Endothelial cell of umbilical vein (primary cell): ENCODE measurements at regions of chr14 and their contacts with region 1.

Region 1: GRCh38 chr14:30558675-30559555 is at the start of gene G2E3:
- DNase-seq: peak; percentile 89
- H3K4me3 ChIP-seq: peak within 1 kb of the TSS; percentile 90 to 97 (median 94)
- H3K27ac ChIP-seq: peak within 1 kb of the TSS; percentile 66
- H3K4me1 ChIP-seq: peaks cover 12% of the 10 kb centered on the region
- H3K27me3 ChIP-seq: no peaks in the 10 kb centered on the region
- CTCF ChIP-seq: no peak
- POLR2A ChIP-seq: peak; percentile 86
- total RNA-seq, gene G2E3: 26.6 and 34.8 TPM in 2 replicates

Region 2: DNA sequence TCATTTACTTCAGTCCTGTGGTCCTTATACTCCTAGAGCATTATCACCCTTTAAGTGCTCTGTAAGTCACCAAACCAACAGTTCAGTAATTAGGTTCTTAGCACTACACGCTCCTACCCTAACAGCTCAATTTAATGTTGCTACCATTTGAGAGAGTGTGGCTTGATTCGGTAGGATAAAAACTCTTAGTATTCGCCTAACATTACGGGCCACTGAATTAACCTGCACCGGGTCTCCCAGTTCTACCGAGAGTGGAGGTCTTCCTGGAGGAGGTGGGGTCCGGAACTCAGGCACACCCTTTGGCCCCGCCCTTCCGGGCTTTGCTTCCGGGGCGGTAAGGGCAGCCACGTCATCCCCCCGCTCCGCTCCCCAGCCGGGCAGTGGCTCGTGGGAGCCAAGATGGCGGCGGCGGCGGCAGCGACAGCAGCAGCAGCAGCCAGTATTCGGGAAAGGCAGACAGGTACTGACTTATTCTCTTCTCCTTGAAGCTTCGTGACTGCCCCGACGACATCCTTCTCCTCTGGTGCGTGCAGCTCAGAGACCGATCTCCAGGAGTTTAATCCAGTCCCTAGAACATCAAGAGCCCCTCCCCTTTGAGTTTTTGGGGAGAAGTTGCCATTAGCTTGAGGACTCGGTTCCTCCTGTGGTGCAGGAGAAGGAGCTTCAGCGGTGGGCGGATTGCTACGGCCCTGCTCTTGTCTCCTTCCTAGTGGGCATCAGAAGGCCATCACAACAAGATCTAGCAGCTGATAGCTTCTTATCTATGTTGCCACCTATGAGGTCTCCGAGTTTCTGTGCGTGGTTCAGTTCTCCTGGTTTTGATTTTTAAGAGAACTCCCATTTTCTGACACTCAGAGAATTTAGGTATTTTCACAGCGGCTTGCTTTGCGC is 63.3 kb after region 1 on chr14 and contains the start of gene SCFD1:
- CTCF ChIA-PET with region 1: no interaction called
- POLR2A ChIA-PET with region 1: no interaction called
- dilution Hi-C with region 1: no loop called
- intact Hi-C with region 1: loop called (anchors 1 kb)
- DNase-seq: peak; percentile 89
- H3K4me3 ChIP-seq: peak within 1 kb of the TSS; percentile 27 to 86 (median 78)
- H3K27ac ChIP-seq: peak within 1 kb of the TSS; percentile 68
- H3K4me1 ChIP-seq: peaks cover 7% of the 10 kb centered on the region
- H3K27me3 ChIP-seq: no peaks in the 10 kb centered on the region
- CTCF ChIP-seq: no peak
- POLR2A ChIP-seq: peak; percentile 96
- total RNA-seq, gene SCFD1: 50.4 and 59.9 TPM in 2 replicates